Calu3 (cell line): ENCODE measurements at regions of chr10 and their contacts with region 1.

Region 1: DNA sequence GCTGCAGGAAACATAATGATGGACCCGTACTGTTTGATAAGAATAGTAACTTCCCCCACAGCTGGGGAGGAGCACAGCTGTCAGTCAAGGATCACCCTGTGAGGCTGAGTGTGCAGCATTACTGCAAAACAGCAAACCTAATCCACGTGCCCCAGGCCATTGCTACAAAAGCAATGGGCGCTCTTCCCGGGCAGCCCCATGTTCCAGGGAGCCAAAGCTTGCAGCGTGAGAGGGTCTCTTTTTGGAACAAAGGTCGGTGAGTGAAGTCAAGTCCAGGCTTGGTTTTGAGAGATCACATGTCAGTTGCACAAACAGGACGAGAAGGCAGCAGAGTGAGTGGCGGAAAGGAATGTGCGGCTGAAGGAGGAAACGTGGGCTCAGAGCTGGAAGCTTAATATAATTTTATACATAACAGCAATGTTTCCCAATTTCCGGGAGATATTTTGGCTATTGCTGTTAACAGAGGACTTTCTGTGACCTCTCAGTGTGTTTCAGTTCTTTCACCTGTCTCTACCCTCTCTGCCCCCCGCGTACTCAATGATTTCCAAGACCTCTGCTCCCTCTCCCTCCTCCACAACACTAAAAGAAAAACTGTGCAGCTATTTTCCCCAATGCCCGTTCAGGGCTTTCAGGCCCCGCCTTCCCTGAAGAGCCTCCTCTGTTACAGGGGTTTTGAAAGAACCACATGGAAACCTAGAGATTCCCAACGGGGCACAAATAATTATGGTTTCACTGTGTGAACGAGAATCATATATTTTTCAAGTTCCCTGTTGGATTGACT is 128.9 kb downstream of the MTPAP start:
- DNase-seq: peak; percentile 16
- H3K4me3 Mint-ChIP-seq: peak overlapping the region; percentile 64
- H3K27ac Mint-ChIP-seq: no peak overlapping the region
- H3K4me1 Mint-ChIP-seq: peaks cover 12% of the 10 kb centered on the region
- H3K27me3 Mint-ChIP-seq: peaks cover 14% of the 10 kb centered on the region
- CTCF ChIP-seq: no peak

Region 2: GRCh38 chr10:29926693-29927048 is 293.5 kb before region 1 on chr10:
- CTCF ChIA-PET with region 1: no interaction called
- intact Hi-C with region 1: loop called (anchors 10 kb)
- DNase-seq: peak; percentile 28
- H3K4me3 Mint-ChIP-seq: no peak overlapping the region
- H3K27ac Mint-ChIP-seq: no peak overlapping the region
- H3K4me1 Mint-ChIP-seq: peaks cover 18% of the 10 kb centered on the region
- H3K27me3 Mint-ChIP-seq: no peaks in the 10 kb centered on the region
- CTCF ChIP-seq: no peak

Region 3: GRCh38 chr10:30857803-30858202 is 637.6 kb after region 1 on chr10:
- CTCF ChIA-PET with region 1: no interaction called
- intact Hi-C with region 1: no loop called
- DNase-seq: no peak
- H3K4me3 Mint-ChIP-seq: no peak overlapping the region
- H3K27ac Mint-ChIP-seq: no peak overlapping the region
- H3K4me1 Mint-ChIP-seq: no peaks in the 10 kb centered on the region
- H3K27me3 Mint-ChIP-seq: no peaks in the 10 kb centered on the region
- CTCF ChIP-seq: no peak